ENCODE measurements at regions of chr1 and their contacts with region 1.

Region 1: GRCh38 chr1:150072959-150073358 is 5.4 kb downstream of the VPS45 start:
- DNase-seq: no peak
- ATAC-seq: peak; percentile 85
- H3K4me3 ChIP-seq: no peak overlapping the region
- H3K27ac ChIP-seq: no peak overlapping the region
- H3K4me1 ChIP-seq: no peaks in the 10 kb centered on the region
- H3K27me3 ChIP-seq: no peaks in the 10 kb centered on the region
- CTCF ChIP-seq: peak in 2 of 3 experiments; percentile 27 to 42; a peak in 2 of 6 replicates
- EP300 ChIP-seq: no peak
- POLR2A ChIP-seq: no peak
- RAD21 ChIP-seq: peak; percentile 42; the same call in 1 of the 2 replicates

Region 2: DNA sequence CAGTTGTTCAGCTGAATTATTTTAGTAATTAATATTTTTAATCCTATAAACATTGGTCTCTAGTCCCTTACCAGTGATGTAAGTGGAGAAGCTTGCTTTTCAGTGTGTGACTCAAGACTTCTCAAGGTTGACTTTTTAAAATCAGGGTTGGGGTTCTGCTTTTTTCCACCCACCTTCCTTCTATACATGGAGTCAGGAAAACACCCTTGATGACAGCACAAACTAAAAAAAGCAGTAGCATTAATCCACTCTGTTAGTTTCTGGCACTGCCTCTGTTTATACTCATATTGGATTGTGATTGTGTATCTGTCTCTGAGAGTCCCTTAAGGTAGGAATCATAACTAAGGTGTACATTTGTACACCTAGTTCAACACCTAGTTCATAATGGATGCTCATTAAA is 68.5 kb after region 1 on chr1:
- CTCF ChIA-PET with region 1: interaction called, 10 read pairs
- POLR2A ChIA-PET with region 1: interaction called, 3 read pairs
- RAD21 ChIA-PET with region 1: interaction called, 4 read pairs
- SMC1A ChIA-PET with region 1: interaction called, 3 read pairs
- in situ Hi-C with region 1: no loop called
- intact Hi-C with region 1: no loop called
- DNase-seq: no peak
- ATAC-seq: peak; percentile 31; the same call in 2 of the 3 replicates
- H3K4me3 ChIP-seq: no peak overlapping the region
- H3K27ac ChIP-seq: peak overlapping the region; percentile 1; the same call in 1 of the 2 replicates
- H3K4me1 ChIP-seq: peaks cover 12% of the 10 kb centered on the region
- H3K27me3 ChIP-seq: no peaks in the 10 kb centered on the region
- CTCF ChIP-seq: no peak
- EP300 ChIP-seq: no peak
- POLR2A ChIP-seq: no peak
- RAD21 ChIP-seq: no peak

Region 3: DNA sequence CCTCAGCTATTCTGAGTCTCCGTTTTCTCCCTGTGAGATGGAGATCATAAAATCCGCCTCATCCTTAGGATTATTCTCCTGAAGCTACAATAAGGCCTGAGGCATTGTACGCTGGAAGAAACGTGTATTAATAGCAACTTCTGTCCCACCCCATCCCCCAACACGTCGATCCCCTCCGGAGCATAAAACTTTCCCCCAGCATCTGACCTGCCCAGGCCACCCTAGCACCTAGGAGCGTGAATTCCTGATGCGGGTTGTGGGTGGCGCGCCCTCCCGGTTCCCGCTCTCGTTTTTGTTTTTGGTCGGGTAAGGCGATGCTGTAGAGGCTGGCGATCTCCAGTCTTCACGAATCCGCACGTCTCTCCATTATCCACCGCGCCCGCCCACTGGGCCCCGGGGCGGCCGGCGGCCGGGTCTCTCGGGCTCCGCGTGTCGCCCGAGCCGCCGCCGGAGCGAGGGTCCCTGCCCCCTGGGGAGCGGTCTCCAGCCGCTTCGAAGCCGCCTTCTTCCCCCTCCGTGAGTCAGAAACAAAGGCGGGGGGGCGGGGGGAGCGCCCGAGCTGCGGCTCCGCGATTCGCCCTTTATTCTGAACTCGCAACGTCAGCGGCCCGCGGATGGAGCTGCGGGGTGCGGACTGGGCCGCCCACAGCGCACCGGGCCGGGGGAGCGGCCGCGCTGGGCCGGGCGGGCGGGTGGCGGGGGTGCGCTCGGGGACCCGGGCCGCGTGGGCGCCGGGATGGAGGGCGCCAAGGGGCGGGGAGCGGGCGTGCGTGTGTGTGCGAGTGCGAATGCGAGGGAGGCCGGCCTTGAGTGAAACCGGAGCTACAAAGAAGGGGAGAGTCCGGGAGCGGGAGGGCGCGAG is 76.5 kb after region 1 on chr1 and contains the start of gene PLEKHO1:
- CTCF ChIA-PET with region 1: interaction called, 577 read pairs
- POLR2A ChIA-PET with region 1: interaction called, 6 read pairs
- RAD21 ChIA-PET with region 1: interaction called, 3 read pairs
- SMC1A ChIA-PET with region 1: interaction called, 6 read pairs
- in situ Hi-C with region 1: no loop called
- intact Hi-C with region 1: no loop called
- DNase-seq: no peak
- ATAC-seq: peak; percentile 68
- H3K4me3 ChIP-seq: peak within 1 kb of the TSS; percentile 100
- H3K27ac ChIP-seq: peak within 1 kb of the TSS; percentile 99
- H3K4me1 ChIP-seq: peaks cover 20% of the 10 kb centered on the region
- H3K27me3 ChIP-seq: no peaks in the 10 kb centered on the region
- CTCF ChIP-seq: no peak
- EP300 ChIP-seq: no peak
- POLR2A ChIP-seq: peak; percentile 79
- RAD21 ChIP-seq: no peak
- polyA plus RNA-seq, gene PLEKHO1: 5.3 to 12.9 TPM

Region 4: GRCh38 chr1:150156868-150157603 is 84.1 kb after region 1 on chr1:
- CTCF ChIA-PET with region 1: interaction called, 577 read pairs
- POLR2A ChIA-PET with region 1: interaction called, 21 read pairs
- RAD21 ChIA-PET with region 1: interaction called, 287 read pairs
- SMC1A ChIA-PET with region 1: interaction called, 338 read pairs
- in situ Hi-C with region 1: no loop called
- intact Hi-C with region 1: no loop called
- DNase-seq: no peak
- ATAC-seq: no peak
- H3K4me3 ChIP-seq: no peak overlapping the region
- H3K27ac ChIP-seq: peak overlapping the region; percentile 28
- H3K4me1 ChIP-seq: peaks cover 53% of the 10 kb centered on the region
- H3K27me3 ChIP-seq: no peaks in the 10 kb centered on the region
- CTCF ChIP-seq: no peak
- EP300 ChIP-seq: no peak
- POLR2A ChIP-seq: peak; percentile 53; the same call in 1 of the 2 replicates
- RAD21 ChIP-seq: no peak

Region 5: DNA sequence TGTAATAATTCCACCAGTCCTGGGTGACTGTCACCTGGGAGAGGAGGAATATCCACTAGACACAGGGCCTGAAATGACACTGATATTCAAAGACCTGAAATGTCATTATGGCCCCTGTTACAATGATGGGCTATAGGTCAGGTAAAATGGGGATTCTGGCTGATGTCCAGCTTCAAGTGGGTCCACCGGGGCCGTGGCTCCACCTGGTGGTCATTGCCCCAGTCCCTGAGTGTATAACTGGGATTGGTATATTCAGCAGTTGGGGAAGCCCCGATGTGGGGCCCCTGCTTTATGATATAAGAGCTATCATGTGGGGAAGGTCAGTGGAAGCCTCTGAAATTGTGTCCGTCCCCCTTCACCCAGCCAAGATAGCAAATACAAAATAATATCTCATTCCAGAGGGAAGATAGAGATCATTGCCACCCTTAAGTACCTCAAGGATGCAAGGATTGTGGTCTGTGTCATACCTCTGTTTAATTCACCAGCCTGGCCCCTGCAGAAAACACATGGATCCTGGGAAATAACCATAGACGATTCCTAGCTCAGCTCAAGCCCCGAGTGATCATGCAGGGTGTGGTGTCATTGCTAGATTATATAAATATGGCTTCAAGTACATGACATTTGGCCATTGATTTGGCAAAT is 96.1 kb after region 1 on chr1:
- CTCF ChIA-PET with region 1: interaction called, 577 read pairs
- POLR2A ChIA-PET with region 1: interaction called, 13 read pairs
- RAD21 ChIA-PET with region 1: interaction called, 287 read pairs
- SMC1A ChIA-PET with region 1: interaction called, 338 read pairs
- in situ Hi-C with region 1: loop called (anchors 5 kb)
- intact Hi-C with region 1: loop called (anchors 1 kb)
- DNase-seq: no peak
- ATAC-seq: peak; percentile 78
- H3K4me3 ChIP-seq: no peak overlapping the region
- H3K27ac ChIP-seq: no peak overlapping the region
- H3K4me1 ChIP-seq: peaks cover 28% of the 10 kb centered on the region
- H3K27me3 ChIP-seq: no peaks in the 10 kb centered on the region
- CTCF ChIP-seq: peak; percentile 77 to 88 (median 87)
- EP300 ChIP-seq: no peak
- POLR2A ChIP-seq: no peak
- RAD21 ChIP-seq: peak; percentile 94